ENCODE measurements at regions of chr7 and their contacts with region 1.

Region 1: DNA sequence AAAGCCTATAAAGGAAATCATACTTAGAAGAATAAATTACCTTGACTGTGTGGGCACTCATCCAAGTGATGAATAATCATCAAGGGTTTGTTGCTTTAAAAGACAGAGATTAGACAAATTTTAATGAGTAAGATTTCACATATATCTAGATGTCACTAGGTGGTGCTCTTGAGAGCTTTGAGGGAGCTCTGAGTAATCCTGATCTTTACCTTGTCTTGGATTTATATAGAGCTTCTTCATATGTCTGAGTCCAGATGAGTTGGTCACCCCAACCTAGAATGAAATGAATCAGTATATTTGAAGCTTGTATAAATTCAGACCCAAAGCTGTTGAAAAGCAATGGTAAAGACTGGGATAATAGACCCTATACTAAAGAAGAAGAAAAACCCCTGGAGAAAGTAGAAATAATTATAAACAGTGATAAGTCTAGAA is 3.7 kb downstream of the AGR2 start:
- DNase-seq: peak; percentile 40
- ATAC-seq: peak; percentile 36
- H3K4me3 ChIP-seq: no peak overlapping the region
- H3K4me3 Mint-ChIP-seq: no peak overlapping the region
- H3K27ac ChIP-seq: no peak overlapping the region
- H3K27ac Mint-ChIP-seq: no peak overlapping the region
- H3K4me1 ChIP-seq: no peaks in the 10 kb centered on the region
- H3K4me1 Mint-ChIP-seq: no peaks in the 10 kb centered on the region
- H3K27me3 ChIP-seq: no peaks in the 10 kb centered on the region
- H3K27me3 Mint-ChIP-seq: no peaks in the 10 kb centered on the region
- CTCF ChIP-seq: peak; percentile 64

Region 2: GRCh38 chr7:16695621-16696237 is 105.4 kb before region 1 on chr7:
- CTCF ChIA-PET with region 1: interaction called, 6 read pairs
- POLR2A ChIA-PET with region 1: no interaction called
- intact Hi-C with region 1: loop called (anchors 10 kb)
- DNase-seq: peak; percentile 59
- ATAC-seq: peak; percentile 51
- H3K4me3 ChIP-seq: no peak overlapping the region
- H3K4me3 Mint-ChIP-seq: no peak overlapping the region
- H3K27ac ChIP-seq: no peak overlapping the region
- H3K27ac Mint-ChIP-seq: no peak overlapping the region
- H3K4me1 ChIP-seq: no peaks in the 10 kb centered on the region
- H3K4me1 Mint-ChIP-seq: no peaks in the 10 kb centered on the region
- H3K27me3 ChIP-seq: no peaks in the 10 kb centered on the region
- H3K27me3 Mint-ChIP-seq: no peaks in the 10 kb centered on the region
- CTCF ChIP-seq: peak; percentile 79

Region 3: GRCh38 chr7:16779051-16779450 is 22.1 kb before region 1 on chr7:
- CTCF ChIA-PET with region 1: interaction called, 15 read pairs
- POLR2A ChIA-PET with region 1: no interaction called
- intact Hi-C with region 1: no loop called
- DNase-seq: no peak
- ATAC-seq: no peak
- H3K4me3 ChIP-seq: no peak overlapping the region
- H3K4me3 Mint-ChIP-seq: no peak overlapping the region
- H3K27ac ChIP-seq: no peak overlapping the region
- H3K27ac Mint-ChIP-seq: no peak overlapping the region
- H3K4me1 ChIP-seq: peaks cover 10 to 30% of the 10 kb centered on the region in 2 donors
- H3K4me1 Mint-ChIP-seq: peaks cover 33% of the 10 kb centered on the region
- H3K27me3 ChIP-seq: no peaks in the 10 kb centered on the region
- H3K27me3 Mint-ChIP-seq: no peaks in the 10 kb centered on the region
- CTCF ChIP-seq: no peak

Region 4: DNA sequence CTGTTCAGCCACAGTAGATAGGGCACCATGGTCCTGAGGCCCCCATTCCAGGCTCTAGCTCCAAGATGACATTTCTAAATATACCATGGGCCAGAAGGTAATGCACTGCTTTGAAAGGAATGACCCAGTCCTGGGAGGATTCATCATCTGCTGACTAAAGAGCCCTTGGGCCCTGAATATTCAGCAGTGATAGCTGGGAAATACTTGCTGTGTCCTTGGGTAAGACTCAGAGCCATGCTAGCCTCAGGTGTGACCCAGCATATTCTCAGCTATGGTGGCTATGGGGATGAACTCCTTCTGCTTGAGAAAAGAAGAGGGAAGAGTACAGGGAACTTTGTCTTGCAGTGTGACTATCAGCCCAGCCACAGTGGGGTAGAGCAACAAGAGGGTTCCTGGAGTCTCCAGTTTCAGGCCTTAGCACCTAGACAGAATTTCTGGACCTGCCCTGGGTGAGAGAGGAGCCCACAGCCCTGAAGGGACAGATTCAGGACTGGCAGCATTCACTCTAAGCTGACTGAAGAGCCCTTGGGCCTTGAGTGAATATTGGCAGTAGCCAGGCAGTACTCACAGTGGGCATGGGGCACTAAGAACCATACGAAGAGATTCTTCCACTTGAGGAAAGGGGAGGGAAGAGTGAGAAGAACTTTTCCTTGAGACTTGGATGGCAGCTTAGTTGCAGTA is 25.1 kb after region 1 on chr7:
- CTCF ChIA-PET with region 1: no interaction called
- POLR2A ChIA-PET with region 1: no interaction called
- intact Hi-C with region 1: no loop called
- DNase-seq: no peak
- ATAC-seq: no peak
- H3K4me3 ChIP-seq: no peak overlapping the region
- H3K4me3 Mint-ChIP-seq: no peak overlapping the region
- H3K27ac ChIP-seq: no peak overlapping the region
- H3K27ac Mint-ChIP-seq: no peak overlapping the region
- H3K4me1 ChIP-seq: no peaks in the 10 kb centered on the region
- H3K4me1 Mint-ChIP-seq: no peaks in the 10 kb centered on the region
- H3K27me3 ChIP-seq: peaks cover 0 to 10% (median 0%) of the 10 kb centered on the region in 4 experiments
- H3K27me3 Mint-ChIP-seq: peaks cover 21% of the 10 kb centered on the region
- CTCF ChIP-seq: no peak

Region 5: DNA sequence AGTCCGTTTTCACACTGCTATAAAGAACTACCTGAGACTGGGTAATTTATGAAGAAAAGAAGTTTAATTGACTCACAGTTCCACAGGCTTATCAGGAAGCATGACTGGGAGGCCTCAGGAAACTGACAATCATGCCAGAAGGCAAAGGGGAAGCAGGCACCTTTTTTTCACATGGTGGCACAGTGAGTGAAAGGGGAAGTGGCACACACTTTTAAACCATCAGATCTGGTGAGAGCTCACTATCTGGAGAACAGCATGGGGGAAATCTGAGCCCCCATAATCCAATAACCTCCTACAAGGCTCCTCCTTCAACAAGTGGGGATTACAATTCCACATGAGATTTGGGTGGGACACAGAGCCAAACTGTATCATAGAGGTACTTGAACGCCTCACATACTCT is 50.7 kb after region 1 on chr7:
- CTCF ChIA-PET with region 1: interaction called, 3 read pairs
- POLR2A ChIA-PET with region 1: no interaction called
- intact Hi-C with region 1: loop called (anchors 2 kb)
- DNase-seq: peak; percentile 59
- ATAC-seq: peak; percentile 72
- H3K4me3 ChIP-seq: no peak overlapping the region
- H3K4me3 Mint-ChIP-seq: peak overlapping the region; percentile 55
- H3K27ac ChIP-seq: no peak overlapping the region
- H3K27ac Mint-ChIP-seq: peak overlapping the region; percentile 53
- H3K4me1 ChIP-seq: peaks cover 10 to 13% of the 10 kb centered on the region in 2 donors
- H3K4me1 Mint-ChIP-seq: peaks cover 14% of the 10 kb centered on the region
- H3K27me3 ChIP-seq: no peaks in the 10 kb centered on the region
- H3K27me3 Mint-ChIP-seq: no peaks in the 10 kb centered on the region
- CTCF ChIP-seq: no peak